AG04449 (cell line): ENCODE measurements at regions of chr3 and their contacts with region 1.

Region 1: GRCh38 chr3:4493014-4493940 is at the start of gene ITPR1:
- DNase-seq: peak; percentile 76
- H3K4me3 ChIP-seq: peak within 1 kb of the TSS; percentile 86
- CTCF ChIP-seq: peak; percentile 0

Region 2: DNA sequence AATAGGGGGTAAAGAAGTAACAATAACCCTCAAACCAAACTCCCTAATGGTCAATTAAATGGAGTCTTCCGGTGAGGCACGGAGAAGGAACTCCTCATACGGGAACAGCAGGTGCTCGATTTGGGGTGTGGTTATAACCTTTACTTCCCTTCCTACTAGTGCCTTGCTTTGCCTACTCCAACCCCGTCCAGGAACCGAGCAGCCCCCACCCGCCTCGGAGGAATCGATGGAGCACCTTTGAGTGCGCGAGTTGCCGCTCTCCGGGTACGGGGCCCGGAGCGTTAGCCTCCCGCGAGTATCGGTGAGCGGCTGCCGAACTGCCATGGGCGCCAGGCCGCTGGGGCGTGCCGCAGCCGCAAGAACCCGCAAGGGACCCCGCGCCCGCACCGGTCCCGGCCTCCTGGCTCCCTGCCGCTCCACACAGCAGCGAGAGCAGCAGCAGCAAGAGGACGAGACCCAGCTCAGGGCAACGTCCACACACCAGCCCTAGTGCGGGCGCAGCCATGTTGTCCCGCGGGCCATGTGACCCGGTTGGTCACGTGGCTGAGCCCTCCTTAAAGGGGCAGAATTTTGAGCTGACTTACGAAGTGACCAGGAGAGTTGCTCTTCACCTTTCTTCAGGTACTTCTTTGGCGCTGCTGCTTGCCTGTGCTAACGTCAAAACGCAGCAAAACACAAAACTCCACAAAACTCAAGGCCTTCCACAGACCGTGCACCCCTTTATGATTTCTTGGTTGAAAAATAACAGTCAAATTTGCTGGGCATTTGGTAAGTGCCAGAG is 26.3 kb before region 1 on chr3 and contains the start of gene SUMF1:
- CTCF ChIA-PET with region 1: interaction called, 3 read pairs
- POLR2A ChIA-PET with region 1: interaction called, 26 read pairs
- DNase-seq: peak; percentile 10
- H3K4me3 ChIP-seq: peak within 1 kb of the TSS; percentile 86
- CTCF ChIP-seq: no peak

Region 3: DNA sequence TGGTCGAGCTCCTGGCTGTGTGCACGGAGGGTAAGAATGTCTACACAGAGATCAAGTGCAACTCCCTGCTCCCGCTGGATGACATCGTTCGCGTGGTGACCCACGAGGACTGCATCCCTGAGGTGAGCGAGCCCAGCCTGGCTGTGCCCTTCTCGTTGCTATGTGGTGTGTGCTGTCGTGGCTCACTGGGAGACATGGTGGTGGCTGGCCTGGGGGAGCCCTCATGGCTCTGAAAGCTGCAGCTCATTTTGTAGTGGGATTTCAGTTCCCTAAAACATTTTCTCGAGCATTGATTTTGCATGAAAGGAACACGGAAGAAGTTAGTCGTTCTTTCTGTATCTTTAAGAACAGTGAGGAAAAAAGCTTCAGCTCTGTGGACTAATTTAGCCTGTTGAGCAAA is 200.3 kb after region 1 on chr3:
- CTCF ChIA-PET with region 1: no interaction called
- POLR2A ChIA-PET with region 1: no interaction called
- DNase-seq: no peak
- H3K4me3 ChIP-seq: no peak overlapping the region
- CTCF ChIP-seq: no peak